HepG2 (cell line): ENCODE measurements at regions of chr21 and their contacts with region 1.

Region 1: GRCh38 chr21:41768437-41769061 is 1.7 kb upstream of the RIPK4 start:
- DNase-seq: peak; percentile 95
- ATAC-seq: peak; percentile 71
- H3K4me3 ChIP-seq: peak overlapping the region; percentile 51 to 84 (median 80)
- H3K27ac ChIP-seq: peak overlapping the region; percentile 55
- H3K4me1 ChIP-seq: peaks cover 74% of the 10 kb centered on the region
- H3K27me3 ChIP-seq: peaks cover 4 to 36% of the 10 kb centered on the region in 2 experiments; a peak in 3 of 5 replicates
- CTCF ChIP-seq: peak; percentile 77
- EP300 ChIP-seq: peak; percentile 81 to 83
- POLR2A ChIP-seq: no peak
- RAD21 ChIP-seq: peak; percentile 69

Region 2: GRCh38 chr21:41536641-41537103 is 231.9 kb before region 1 on chr21:
- CTCF ChIA-PET with region 1: no interaction called
- POLR2A ChIA-PET with region 1: no interaction called
- in situ Hi-C with region 1: no loop called
- intact Hi-C with region 1: no loop called
- DNase-seq: no peak
- ATAC-seq: peak; percentile 56
- H3K4me3 ChIP-seq: no peak overlapping the region; a peak in 1 of 6 replicates
- H3K27ac ChIP-seq: no peak overlapping the region
- H3K4me1 ChIP-seq: peaks cover 14% of the 10 kb centered on the region
- H3K27me3 ChIP-seq: peaks cover 0 to 20% of the 10 kb centered on the region in 2 experiments; a peak in 4 of 5 replicates
- CTCF ChIP-seq: no peak
- EP300 ChIP-seq: no peak
- POLR2A ChIP-seq: no peak
- RAD21 ChIP-seq: no peak

Region 3: DNA sequence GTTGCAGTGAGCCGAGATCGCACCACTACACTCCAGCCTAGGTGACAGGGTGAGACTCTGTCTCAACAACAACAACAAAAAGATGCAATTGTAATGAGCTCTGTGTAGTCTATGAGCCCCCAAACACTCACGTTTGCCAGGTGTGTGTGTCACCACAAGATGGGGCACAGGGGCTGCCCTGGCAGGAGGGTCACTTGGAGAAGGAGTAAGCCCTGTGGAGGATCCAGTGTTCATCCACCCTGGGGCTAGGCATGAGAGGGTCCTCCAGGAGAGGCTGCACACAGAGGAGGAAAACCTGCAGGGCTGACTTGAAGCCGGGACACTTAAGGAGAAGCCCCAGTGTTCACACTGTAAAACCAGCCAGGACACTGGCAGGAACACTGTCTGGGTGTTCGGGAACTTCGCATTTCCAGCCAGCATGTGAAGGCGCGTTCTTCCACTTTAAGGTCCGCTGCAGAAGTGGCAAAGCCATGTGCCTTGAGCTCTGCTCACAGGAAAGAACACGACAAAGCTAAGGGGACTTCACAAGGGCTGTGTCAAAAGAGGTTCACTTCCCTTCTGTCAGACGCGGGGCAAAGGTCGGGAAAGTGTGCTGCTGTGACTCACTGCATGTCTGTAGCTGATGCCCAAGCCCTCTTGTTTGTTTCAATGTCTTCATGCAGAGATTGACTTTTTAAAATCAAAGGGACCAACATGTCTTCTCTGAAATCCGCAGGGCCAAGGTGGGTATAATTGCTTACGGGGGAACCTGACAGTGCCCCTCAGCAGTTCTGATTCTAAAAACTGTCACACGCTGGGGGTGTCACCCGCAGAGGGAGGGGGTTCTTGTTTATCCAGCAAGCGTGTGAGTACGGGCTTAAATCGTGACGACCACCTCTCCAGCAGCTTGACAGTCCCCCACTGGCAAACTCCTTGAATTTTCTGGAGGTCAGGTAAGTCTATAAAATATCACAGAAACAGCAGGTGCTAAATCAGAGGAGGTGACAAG is 104.5 kb before region 1 on chr21:
- CTCF ChIA-PET with region 1: no interaction called
- POLR2A ChIA-PET with region 1: interaction called, 3 read pairs
- in situ Hi-C with region 1: loop called (anchors 5 kb)
- intact Hi-C with region 1: no loop called
- DNase-seq: peak; percentile 80
- ATAC-seq: peak; percentile 87
- H3K4me3 ChIP-seq: peak overlapping the region in 2 of 3 experiments; percentile 4 to 60; a peak in 2 of 6 replicates
- H3K27ac ChIP-seq: no peak overlapping the region
- H3K4me1 ChIP-seq: peaks cover 24% of the 10 kb centered on the region
- H3K27me3 ChIP-seq: peaks cover 2 to 37% of the 10 kb centered on the region in 2 experiments; a peak in 4 of 5 replicates
- CTCF ChIP-seq: peak; percentile 64
- EP300 ChIP-seq: no peak
- POLR2A ChIP-seq: no peak
- RAD21 ChIP-seq: 0 out of 2 replicates have a peak, but pooled peaks have one; percentile 28

Region 4: DNA sequence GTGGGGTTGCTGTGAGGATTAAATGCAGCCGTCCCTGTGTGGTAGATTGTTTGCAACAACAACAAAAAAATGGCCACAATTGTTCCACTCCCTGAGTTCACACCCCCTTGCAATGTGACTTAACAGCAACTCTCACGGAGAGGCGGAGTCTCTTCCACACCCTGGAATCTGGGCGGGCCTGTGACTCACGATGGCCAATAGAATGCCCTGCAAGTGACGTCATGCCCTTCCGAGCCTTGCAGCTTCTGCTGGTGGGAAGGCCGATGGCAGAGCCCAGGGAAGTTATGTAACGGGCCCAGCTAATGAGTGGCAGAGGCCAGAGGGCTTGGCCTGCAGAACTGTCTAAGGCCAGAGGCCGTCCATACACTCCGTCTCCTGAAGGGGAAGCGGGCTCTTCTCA is 89.6 kb before region 1 on chr21:
- CTCF ChIA-PET with region 1: interaction called, 3 read pairs
- POLR2A ChIA-PET with region 1: interaction called, 11 read pairs
- in situ Hi-C with region 1: no loop called
- intact Hi-C with region 1: loop called (anchors 2 kb)
- DNase-seq: peak; percentile 98
- ATAC-seq: peak; percentile 93
- H3K4me3 ChIP-seq: peak overlapping the region; percentile 38 to 70 (median 40); a peak in 5 of 6 replicates
- H3K27ac ChIP-seq: peak overlapping the region; percentile 69
- H3K4me1 ChIP-seq: peaks cover 51% of the 10 kb centered on the region
- H3K27me3 ChIP-seq: peaks cover 2 to 28% of the 10 kb centered on the region in 2 experiments; a peak in 4 of 5 replicates
- CTCF ChIP-seq: no peak
- EP300 ChIP-seq: no peak
- POLR2A ChIP-seq: peak; percentile 17 to 45; a peak in 1 of 4 replicates
- RAD21 ChIP-seq: no peak

Region 5: DNA sequence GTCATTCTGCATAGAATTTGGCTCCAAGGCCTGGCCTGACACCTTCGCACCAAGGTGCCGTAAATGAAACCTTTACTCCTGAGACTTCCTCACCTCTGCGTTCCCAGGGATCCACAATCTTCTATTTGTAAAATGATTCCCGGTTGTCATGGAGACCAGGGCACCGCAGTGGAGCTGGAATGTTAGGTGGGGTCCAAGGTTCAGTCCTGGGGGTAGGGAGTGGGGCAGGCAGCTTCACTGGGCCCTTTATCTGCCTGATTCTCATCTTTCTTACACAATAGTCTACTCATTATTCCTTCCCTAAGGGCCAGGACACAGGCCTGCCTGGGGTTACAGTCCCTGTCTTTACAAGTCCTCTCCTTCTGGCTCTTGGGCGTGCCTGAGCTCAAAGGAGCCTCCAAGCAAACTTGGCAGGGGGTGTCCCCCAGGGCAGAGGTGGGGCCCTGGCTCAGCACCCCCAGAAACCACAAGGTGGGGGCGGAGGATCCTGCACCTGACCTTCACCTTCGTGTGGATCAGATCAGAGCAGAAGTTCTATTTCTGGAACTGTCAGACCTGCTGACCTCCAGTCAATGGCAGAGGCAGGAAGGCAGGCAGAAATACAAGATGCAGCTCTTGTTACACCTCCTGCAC is 52.8 kb before region 1 on chr21:
- CTCF ChIA-PET with region 1: no interaction called
- POLR2A ChIA-PET with region 1: interaction called, 106 read pairs
- in situ Hi-C with region 1: loop called (anchors 5 kb)
- intact Hi-C with region 1: loop called (anchors 2 kb)
- DNase-seq: peak; percentile 98
- ATAC-seq: peak; percentile 87
- H3K4me3 ChIP-seq: peak overlapping the region; percentile 27 to 73 (median 42); a peak in 5 of 6 replicates
- H3K27ac ChIP-seq: peak overlapping the region; percentile 98
- H3K4me1 ChIP-seq: peaks cover 89% of the 10 kb centered on the region
- H3K27me3 ChIP-seq: no peaks in the 10 kb centered on the region
- CTCF ChIP-seq: no peak
- EP300 ChIP-seq: peak; percentile 91 to 98
- POLR2A ChIP-seq: peak in 1 of 2 experiments; percentile 62; a peak in 2 of 4 replicates
- RAD21 ChIP-seq: peak; percentile 47; the same call in 1 of the 2 replicates

Region 6: DNA sequence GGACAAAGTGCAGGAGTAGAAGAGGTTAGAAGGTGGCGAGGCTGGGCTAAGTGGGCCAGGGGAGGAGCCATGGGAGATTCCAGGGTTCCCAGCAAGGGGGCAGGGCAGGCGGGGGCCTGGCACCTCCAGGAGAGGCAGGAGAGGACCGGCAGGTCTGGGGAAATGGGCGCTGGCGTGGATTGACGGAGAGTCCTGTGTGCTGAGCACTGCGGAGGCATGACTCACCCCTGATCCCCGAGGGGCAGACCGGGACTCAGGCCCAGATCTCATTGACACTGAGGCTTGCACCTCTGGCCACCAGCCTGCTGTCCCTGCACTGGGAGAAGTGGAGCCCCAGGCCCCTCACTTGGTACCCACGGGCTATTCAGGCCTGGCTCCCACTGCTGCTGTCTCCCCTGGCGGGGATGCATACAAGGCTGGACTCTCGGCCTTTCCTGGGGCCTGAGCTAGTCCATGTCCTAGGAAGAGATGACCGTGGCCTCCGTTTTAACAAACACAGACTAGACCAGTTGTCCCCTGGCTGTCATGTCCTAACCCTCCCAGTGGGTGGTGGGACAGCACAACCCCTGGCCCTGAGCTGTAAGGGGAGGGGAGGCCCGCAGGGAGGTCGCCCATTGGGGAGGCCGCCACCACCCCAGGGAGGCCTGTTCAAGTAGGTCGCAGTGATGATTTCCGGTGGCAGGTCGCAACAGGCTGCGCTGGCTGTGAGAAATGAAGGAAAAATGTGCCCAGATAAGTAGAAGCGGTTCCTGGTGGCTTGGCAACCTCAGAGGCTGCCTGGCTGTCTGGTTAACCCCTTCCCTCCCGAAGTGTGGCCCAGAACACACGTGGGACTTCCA is 41.4 kb before region 1 on chr21:
- CTCF ChIA-PET with region 1: no interaction called
- POLR2A ChIA-PET with region 1: interaction called, 5 read pairs
- in situ Hi-C with region 1: no loop called
- intact Hi-C with region 1: loop called (anchors 2 kb)
- DNase-seq: peak; percentile 48
- ATAC-seq: peak; percentile 86
- H3K4me3 ChIP-seq: peak overlapping the region; percentile 28 to 67 (median 41); a peak in 5 of 6 replicates
- H3K27ac ChIP-seq: no peak overlapping the region
- H3K4me1 ChIP-seq: peaks cover 44% of the 10 kb centered on the region
- H3K27me3 ChIP-seq: peaks cover 2 to 10% of the 10 kb centered on the region in 2 experiments; a peak in 2 of 5 replicates
- CTCF ChIP-seq: peak; percentile 59
- EP300 ChIP-seq: no peak
- POLR2A ChIP-seq: no peak; a peak in 1 of 4 replicates
- RAD21 ChIP-seq: peak; percentile 51; the same call in 1 of the 2 replicates

Region 7: DNA sequence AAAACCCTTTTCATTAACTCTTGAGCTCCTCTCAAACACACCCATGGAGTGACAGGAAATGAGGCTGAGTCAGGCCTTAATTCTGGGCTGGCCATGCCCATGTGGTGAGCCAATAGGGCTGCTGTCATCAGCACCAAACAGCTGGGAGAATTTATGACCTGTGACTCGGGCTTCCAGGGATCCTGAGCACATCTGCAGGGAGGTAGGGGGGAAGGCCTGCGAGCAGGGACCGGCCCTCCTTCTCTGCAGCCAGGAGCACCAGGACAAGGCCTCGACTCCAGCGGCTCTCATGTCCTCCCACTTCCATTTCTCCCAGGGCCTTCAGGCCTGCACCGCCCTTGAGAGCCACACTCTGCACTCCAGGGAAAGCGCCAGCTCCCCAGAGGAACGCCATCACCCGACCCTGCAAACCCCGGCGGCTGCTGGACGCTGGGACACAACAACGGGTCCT is 16.3 kb before region 1 on chr21:
- CTCF ChIA-PET with region 1: no interaction called
- POLR2A ChIA-PET with region 1: interaction called, 35 read pairs
- in situ Hi-C with region 1: no loop called
- intact Hi-C with region 1: loop called (anchors 2 kb)
- DNase-seq: no peak
- ATAC-seq: no peak; the same call in 2 of the 3 replicates
- H3K4me3 ChIP-seq: peak overlapping the region in 1 of 3 experiments; percentile 5; a peak in 1 of 6 replicates
- H3K27ac ChIP-seq: peak overlapping the region; percentile 45
- H3K4me1 ChIP-seq: peaks cover 45% of the 10 kb centered on the region
- H3K27me3 ChIP-seq: no peaks in the 10 kb centered on the region
- CTCF ChIP-seq: no peak
- EP300 ChIP-seq: no peak
- POLR2A ChIP-seq: no peak
- RAD21 ChIP-seq: no peak

Region 8: GRCh38 chr21:41786485-41786987 is 18.0 kb after region 1 on chr21:
- CTCF ChIA-PET with region 1: no interaction called
- POLR2A ChIA-PET with region 1: no interaction called
- in situ Hi-C with region 1: no loop called
- intact Hi-C with region 1: no loop called
- DNase-seq: no peak
- ATAC-seq: peak; percentile 64
- H3K4me3 ChIP-seq: peak overlapping the region in 1 of 3 experiments; percentile 28; a peak in 1 of 6 replicates
- H3K27ac ChIP-seq: no peak overlapping the region
- H3K4me1 ChIP-seq: peaks cover 39% of the 10 kb centered on the region
- H3K27me3 ChIP-seq: peaks cover 1 to 3% of the 10 kb centered on the region in 2 experiments; a peak in 3 of 5 replicates
- CTCF ChIP-seq: peak; percentile 37
- EP300 ChIP-seq: no peak
- POLR2A ChIP-seq: no peak
- RAD21 ChIP-seq: no peak

Region 9: GRCh38 chr21:41816220-41817165 is 47.9 kb after region 1 on chr21:
- CTCF ChIA-PET with region 1: no interaction called
- POLR2A ChIA-PET with region 1: no interaction called
- in situ Hi-C with region 1: no loop called
- intact Hi-C with region 1: loop called (anchors 5 kb)
- DNase-seq: peak; percentile 23
- ATAC-seq: peak; percentile 89
- H3K4me3 ChIP-seq: no peak overlapping the region
- H3K27ac ChIP-seq: no peak overlapping the region
- H3K4me1 ChIP-seq: no peaks in the 10 kb centered on the region
- H3K27me3 ChIP-seq: no peaks in the 10 kb centered on the region; a peak in 1 of 5 replicates
- CTCF ChIP-seq: peak; percentile 82
- EP300 ChIP-seq: no peak
- POLR2A ChIP-seq: no peak
- RAD21 ChIP-seq: peak; percentile 68